ENCODE measurements at regions of chr10 and their contacts with region 1.

Region 1: DNA sequence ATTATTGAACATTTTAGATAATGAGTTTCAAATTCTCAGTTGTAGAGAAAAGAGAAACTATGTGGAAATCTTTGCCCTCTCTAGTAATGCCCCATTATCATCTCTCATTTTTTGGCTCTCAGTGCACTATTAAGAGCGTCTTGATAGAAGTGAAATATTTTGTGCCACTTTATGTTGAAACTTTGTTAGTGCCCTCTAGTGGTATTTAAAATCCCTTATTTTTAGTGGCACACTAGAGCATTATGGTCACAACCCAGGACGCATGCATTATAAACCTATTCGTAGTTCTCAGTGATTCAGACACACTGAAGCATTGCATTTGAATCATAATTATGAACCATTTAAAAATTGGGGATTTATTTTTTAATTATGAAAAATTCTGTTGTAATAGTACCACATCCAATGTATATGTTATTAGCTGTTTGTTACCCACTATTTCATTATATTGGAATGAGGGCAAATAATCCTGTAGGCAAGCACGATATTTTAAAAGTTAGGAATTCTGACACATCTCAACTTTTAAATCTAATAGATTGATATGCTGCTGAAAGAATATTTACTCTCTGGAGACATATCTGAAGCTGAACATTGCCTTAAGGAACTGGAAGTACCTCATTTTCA is 21.9 kb downstream of the PDCD4 start:
- DNase-seq: no peak
- ATAC-seq: peak; percentile 85

Region 2: DNA sequence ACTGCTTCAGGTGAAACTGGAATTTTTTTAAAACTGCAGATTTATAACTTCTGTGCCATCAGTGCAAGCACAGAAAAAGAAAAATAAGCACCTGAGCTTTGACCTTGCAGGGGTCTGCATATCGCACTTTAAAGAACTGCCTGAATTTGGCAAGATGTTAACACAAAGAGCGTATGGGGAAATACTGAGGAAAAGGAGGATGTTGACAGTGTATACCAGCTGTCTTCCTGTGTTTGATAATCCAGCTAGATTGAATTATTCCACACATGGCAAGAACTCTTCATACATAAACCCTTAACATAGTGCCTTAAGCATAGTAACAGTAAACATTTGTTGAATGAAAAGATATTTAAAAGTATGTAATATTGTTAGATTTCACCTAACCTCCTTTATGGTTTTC is 296.2 kb before region 1 on chr10:
- intact Hi-C with region 1: loop called (anchors 10 kb)
- DNase-seq: no peak
- ATAC-seq: no peak

Region 3: GRCh38 chr10:110746254-110746826 is 147.3 kb before region 1 on chr10:
- intact Hi-C with region 1: loop called (anchors 5 kb)
- DNase-seq: no peak
- ATAC-seq: peak; percentile 68

Measured in Right ventricle myocardium superior (tissue), 1 donor.